Activated CD8-positive, alpha-beta T cell treated with anti-CD3 and anti-CD28 coated beads for 36 hours (primary cell): ENCODE measurements at regions of chr12 and their contacts with region 1.

Region 1: DNA sequence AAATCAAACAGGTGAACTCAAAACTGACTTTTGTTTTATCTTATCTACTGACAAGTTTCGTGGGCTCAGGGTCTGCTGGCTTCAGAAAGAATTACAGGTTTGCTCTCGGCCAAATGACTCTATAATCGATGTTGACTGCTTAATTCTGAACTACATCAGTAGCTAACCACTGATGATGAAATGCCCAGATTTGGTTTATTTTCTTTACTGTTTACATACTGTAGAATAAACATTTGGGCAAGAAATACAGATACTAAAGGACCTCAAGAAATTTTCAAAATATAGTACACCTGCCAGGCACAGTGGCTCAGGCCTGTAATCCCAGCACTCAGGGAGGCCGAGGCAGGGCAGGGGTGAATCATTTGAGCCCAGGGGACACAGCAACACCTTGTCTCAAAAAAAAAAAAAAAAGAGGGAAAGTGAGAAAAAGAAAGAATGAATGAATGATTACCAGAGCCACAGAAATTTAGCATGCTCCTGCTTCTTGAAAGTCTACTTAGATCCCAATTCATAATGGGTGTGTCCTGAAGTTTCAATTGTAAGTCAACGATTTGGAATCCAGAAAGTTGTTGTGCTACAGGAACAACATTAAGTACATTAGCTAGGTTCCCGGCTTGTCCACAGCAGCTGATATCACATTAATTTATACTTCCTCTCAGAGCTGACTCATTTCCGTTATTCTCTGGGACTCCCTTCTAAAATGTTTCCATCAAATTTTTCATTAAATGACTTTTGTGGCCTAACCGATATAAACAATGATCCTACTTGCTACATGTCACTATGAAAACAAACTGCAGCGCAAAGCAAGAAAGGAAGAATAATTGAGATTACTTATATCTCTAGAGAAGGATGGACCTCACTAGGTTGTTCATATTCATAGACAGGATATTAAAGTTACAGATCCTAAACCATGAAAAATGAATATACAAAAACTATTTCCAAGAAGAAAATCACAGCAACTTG is 134.3 kb downstream of the MED13L start:
- DNase-seq: peak; percentile 31
- ATAC-seq: peak; percentile 70
- H3K4me3 Mint-ChIP-seq: peak overlapping the region; percentile 8
- H3K27ac Mint-ChIP-seq: peak overlapping the region; percentile 82
- H3K4me1 Mint-ChIP-seq: peaks cover 52% of the 10 kb centered on the region
- H3K27me3 Mint-ChIP-seq: no peaks in the 10 kb centered on the region
- CTCF ChIP-seq: no peak

Region 2: DNA sequence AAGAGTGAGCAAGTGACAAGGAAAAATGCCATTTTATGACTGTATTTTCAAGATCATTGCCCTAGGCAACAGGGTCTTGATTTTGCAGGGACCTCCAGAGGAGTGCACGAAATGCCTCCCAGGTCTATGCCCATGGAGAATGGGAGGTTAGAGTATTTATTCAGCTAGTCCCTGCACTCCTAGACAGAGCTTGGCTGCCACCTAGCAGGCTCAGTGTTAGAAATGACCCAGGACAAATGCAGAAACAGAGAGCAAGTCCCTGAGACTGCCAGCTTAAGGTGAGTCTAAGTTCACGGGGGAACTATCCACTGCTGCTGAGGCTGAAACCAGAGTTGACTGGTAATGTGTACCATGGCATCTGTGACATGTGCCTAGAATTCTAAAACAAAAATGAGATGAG is 372.2 kb before region 1 on chr12:
- CTCF ChIA-PET with region 1: no interaction called
- POLR2A ChIA-PET with region 1: no interaction called
- intact Hi-C with region 1: no loop called
- DNase-seq: no peak
- ATAC-seq: no peak
- H3K4me3 Mint-ChIP-seq: no peak overlapping the region
- H3K27ac Mint-ChIP-seq: no peak overlapping the region
- H3K4me1 Mint-ChIP-seq: no peaks in the 10 kb centered on the region
- H3K27me3 Mint-ChIP-seq: peaks cover 1% of the 10 kb centered on the region
- CTCF ChIP-seq: no peak

Region 3: DNA sequence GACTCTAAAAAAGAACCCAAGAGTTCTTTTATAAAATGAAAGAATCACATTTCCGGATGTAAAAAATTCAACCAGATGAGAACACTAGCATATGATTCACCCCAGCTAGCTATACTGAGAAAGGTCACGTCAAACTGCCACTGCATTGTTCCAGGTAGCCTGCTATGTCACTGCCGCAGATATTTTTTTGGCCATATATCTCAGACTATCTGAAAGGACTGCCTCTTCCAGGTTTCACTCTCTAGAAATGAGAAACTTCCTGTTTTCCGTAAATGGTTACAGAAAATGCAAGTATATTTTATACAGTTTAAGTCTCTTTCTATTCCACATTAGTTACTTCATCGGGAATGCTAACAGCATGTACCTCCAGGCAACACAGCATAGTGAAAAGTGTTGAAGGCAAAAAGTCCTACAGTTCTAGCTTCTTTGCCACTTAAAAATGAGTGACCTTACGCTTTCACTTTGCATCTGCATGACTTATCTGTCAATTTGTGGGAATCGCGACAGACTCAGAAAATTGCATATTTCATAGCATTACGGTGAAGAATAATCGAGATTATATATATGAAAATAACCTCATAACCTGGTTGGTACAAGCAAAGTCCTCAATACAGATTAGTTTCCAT is 29.1 kb after region 1 on chr12:
- CTCF ChIA-PET with region 1: interaction called, 13 read pairs
- POLR2A ChIA-PET with region 1: no interaction called
- intact Hi-C with region 1: no loop called
- DNase-seq: peak; percentile 72
- ATAC-seq: peak; percentile 98
- H3K4me3 Mint-ChIP-seq: peak overlapping the region; percentile 72
- H3K27ac Mint-ChIP-seq: peak overlapping the region; percentile 97
- H3K4me1 Mint-ChIP-seq: peaks cover 63% of the 10 kb centered on the region
- H3K27me3 Mint-ChIP-seq: no peaks in the 10 kb centered on the region
- CTCF ChIP-seq: no peak

Region 4: GRCh38 chr12:116194935-116195431 is 51.8 kb after region 1 on chr12:
- CTCF ChIA-PET with region 1: interaction called, 15 read pairs
- POLR2A ChIA-PET with region 1: no interaction called
- intact Hi-C with region 1: no loop called
- DNase-seq: peak; percentile 90
- ATAC-seq: peak; percentile 97
- H3K4me3 Mint-ChIP-seq: peak overlapping the region; percentile 50
- H3K27ac Mint-ChIP-seq: peak overlapping the region; percentile 61
- H3K4me1 Mint-ChIP-seq: peaks cover 59% of the 10 kb centered on the region
- H3K27me3 Mint-ChIP-seq: no peaks in the 10 kb centered on the region
- CTCF ChIP-seq: peak; percentile 26

Region 5: DNA sequence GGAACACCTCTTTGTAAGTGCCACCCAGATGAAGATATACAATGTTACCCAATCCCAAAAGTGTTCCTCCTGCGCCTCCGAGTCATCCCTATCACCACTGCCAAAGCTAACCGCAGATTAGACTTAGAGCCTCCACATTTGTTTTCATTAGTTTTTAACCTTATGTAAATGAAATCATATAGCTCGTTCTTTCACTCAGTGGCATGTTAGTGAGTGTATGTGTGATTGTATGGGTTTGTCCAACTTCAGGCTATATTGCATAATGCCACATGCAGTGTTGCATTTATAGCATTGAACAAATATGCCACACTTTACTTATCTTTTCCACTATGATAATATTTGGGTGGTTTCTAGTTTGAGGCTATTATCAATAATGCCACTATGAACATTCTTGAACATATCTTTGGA is 433.9 kb after region 1 on chr12:
- CTCF ChIA-PET with region 1: no interaction called
- POLR2A ChIA-PET with region 1: no interaction called
- intact Hi-C with region 1: no loop called
- DNase-seq: no peak
- ATAC-seq: no peak
- H3K4me3 Mint-ChIP-seq: no peak overlapping the region
- H3K27ac Mint-ChIP-seq: no peak overlapping the region
- H3K4me1 Mint-ChIP-seq: no peaks in the 10 kb centered on the region
- H3K27me3 Mint-ChIP-seq: no peaks in the 10 kb centered on the region
- CTCF ChIP-seq: no peak

Region 6: GRCh38 chr12:116591855-116592637 is 448.8 kb after region 1 on chr12:
- CTCF ChIA-PET with region 1: no interaction called
- POLR2A ChIA-PET with region 1: no interaction called
- intact Hi-C with region 1: loop called (anchors 5 kb)
- DNase-seq: no peak
- ATAC-seq: no peak
- H3K4me3 Mint-ChIP-seq: no peak overlapping the region
- H3K27ac Mint-ChIP-seq: no peak overlapping the region
- H3K4me1 Mint-ChIP-seq: peaks cover 15% of the 10 kb centered on the region
- H3K27me3 Mint-ChIP-seq: no peaks in the 10 kb centered on the region
- CTCF ChIP-seq: no peak

Region 7: GRCh38 chr12:116599285-116600136 is 456.3 kb after region 1 on chr12:
- CTCF ChIA-PET with region 1: interaction called, 10 read pairs
- POLR2A ChIA-PET with region 1: no interaction called
- intact Hi-C with region 1: loop called (anchors 5 kb)
- DNase-seq: peak; percentile 71
- ATAC-seq: no peak
- H3K4me3 Mint-ChIP-seq: no peak overlapping the region
- H3K27ac Mint-ChIP-seq: no peak overlapping the region
- H3K4me1 Mint-ChIP-seq: peaks cover 15% of the 10 kb centered on the region
- H3K27me3 Mint-ChIP-seq: no peaks in the 10 kb centered on the region
- CTCF ChIP-seq: peak; percentile 59